Common myeloid progenitor, CD34-positive (primary cell): ENCODE measurements at regions of chr20 and their contacts with region 1.

Region 1: DNA sequence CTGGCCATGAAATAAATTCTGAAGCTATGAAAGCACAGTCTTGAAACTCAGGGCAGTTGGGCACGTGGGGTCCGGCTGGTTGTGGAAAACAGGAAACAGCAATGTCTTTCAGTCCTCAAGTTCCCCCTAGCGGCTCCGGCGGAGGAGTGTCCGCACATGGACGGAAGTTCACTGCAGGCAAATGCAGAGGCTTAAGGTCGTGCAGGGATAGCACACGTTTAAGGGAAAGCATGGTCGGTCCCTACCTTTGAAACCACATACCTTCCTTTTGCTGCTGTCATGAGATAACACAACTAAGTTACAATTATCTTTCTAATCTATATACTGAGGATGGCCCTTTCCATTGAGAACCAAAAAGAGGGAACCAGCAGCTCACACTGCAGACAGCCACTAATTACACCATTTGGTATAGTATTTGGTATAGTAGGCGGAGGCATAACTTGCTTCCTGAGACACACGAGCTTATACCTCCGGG is 52.6 kb upstream of the NFATC2 start:
- DNase-seq: peak; percentile 84 to 92 (median 91)
- H3K4me3 ChIP-seq: peak overlapping the region in 2 of 7 experiments; percentile 22 to 45
- H3K27ac ChIP-seq: peak overlapping the region in 1 of 2 experiments; percentile 43
- H3K4me1 ChIP-seq: peaks cover 9 to 16% (median 15%) of the 10 kb centered on the region in 4 experiments
- H3K27me3 ChIP-seq: no peaks in the 10 kb centered on the region

Region 2: DNA sequence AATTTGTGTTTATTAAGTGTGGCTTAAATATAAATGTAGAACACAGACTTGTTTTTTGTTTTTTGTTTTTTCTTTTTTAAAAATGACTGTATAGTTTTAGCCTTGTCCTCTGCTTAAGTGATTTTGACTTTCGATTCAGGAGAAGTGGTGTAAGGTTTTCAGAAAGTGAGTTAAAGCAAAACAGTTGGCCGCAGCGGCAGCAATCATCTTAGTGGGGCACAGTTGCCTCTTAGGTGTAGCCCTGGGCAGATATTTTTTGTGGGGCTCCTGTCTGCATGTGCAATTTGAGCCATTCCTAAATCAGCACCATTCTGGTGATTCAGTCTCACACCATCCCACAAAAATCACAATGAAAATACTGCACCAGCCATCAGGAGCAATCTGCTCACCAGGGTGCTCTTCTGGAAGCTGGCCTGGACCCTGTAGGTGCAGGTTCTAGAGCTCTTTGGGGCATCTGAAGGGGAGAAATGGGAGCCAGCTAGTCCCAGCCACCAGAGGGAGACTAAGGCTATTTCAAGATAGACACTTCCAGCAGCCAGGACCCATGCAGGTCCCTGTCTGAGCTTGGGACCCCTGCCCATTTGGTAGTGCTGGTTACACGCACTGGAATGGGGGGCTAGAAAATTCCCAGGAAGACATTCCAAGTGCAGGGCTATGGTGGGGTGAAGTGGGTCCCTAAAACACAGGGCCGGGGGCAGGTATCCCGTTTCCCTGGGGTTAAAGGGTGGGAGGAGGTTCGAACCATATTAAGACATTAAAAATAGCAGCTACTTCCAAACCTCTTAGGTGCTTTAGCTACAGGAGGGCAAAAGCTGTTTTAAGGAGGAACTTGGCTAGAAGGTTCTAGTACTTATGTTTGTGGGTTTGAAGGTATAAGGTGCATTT is 209.2 kb before region 1 on chr20:
- CTCF ChIA-PET with region 1: interaction called, 34 read pairs
- POLR2A ChIA-PET with region 1: no interaction called
- DNase-seq: peak; percentile 31 to 57 (median 49)
- H3K4me3 ChIP-seq: no peak overlapping the region
- H3K27ac ChIP-seq: no peak overlapping the region
- H3K4me1 ChIP-seq: no peaks in the 10 kb centered on the region
- H3K27me3 ChIP-seq: no peaks in the 10 kb centered on the region

Region 3: GRCh38 chr20:51456511-51457509 is 138.3 kb before region 1 on chr20:
- CTCF ChIA-PET with region 1: interaction called, 10 read pairs
- POLR2A ChIA-PET with region 1: no interaction called
- DNase-seq: peak; percentile 62 to 80 (median 79)
- H3K4me3 ChIP-seq: peak overlapping the region in 3 of 7 experiments; percentile 10 to 23 (median 14)
- H3K27ac ChIP-seq: no peak overlapping the region
- H3K4me1 ChIP-seq: peaks cover 0 to 12% (median 5%) of the 10 kb centered on the region in 4 experiments
- H3K27me3 ChIP-seq: no peaks in the 10 kb centered on the region

Region 4: GRCh38 chr20:51512645-51513044 is 82.5 kb before region 1 on chr20:
- CTCF ChIA-PET with region 1: no interaction called
- POLR2A ChIA-PET with region 1: no interaction called
- DNase-seq: no peak
- H3K4me3 ChIP-seq: no peak overlapping the region
- H3K27ac ChIP-seq: peak overlapping the region in 1 of 2 experiments; percentile 26
- H3K4me1 ChIP-seq: peaks cover 2 to 19% (median 10%) of the 10 kb centered on the region in 4 experiments
- H3K27me3 ChIP-seq: no peaks in the 10 kb centered on the region

Region 5: DNA sequence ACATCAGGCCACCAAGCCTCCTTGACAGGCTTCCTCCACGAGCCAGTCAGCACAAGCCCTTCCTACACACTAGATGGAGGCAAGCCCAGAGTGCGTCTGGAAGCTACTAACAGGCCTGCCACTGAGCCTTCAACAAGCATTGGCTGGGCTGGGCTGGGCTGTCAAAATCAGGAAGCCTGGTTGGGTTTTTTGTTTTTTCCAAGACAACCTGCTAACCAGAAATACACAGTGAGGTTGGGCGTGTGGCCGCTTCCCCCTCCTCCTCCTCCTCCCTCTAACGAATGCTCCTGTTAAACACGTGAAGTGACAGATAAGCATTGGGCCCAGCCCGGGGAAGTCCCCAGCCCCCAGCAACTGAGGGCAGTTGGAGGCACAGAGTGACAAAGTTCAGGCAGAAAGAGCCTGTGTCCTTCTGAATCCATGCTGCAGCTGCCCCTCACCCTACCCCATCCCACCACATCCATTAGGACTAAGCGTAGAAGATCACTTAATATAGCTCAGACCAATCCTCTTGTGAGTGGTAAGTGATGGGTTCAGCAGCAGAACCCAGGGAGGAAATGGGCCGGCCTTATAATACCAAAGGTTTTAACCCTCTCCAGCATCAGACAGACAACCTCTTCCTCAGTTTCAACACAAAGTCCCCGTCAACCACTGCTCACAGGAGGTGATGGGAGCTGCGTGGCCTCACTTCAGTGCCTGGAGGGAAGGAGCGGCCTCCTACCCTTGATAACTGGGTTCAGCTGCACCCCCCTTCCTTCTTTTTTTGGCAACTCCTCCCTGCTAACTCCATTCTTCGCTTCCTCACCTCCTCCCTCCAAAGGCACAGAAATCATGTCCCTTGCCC is 53.7 kb before region 1 on chr20:
- CTCF ChIA-PET with region 1: interaction called, 35 read pairs
- POLR2A ChIA-PET with region 1: interaction called, 9 read pairs
- DNase-seq: peak; percentile 98 to 100 (median 99)
- H3K4me3 ChIP-seq: peak overlapping the region; percentile 62 to 86 (median 74)
- H3K27ac ChIP-seq: peak overlapping the region; percentile 97 to 98
- H3K4me1 ChIP-seq: peaks cover 13 to 58% (median 53%) of the 10 kb centered on the region in 4 experiments
- H3K27me3 ChIP-seq: no peaks in the 10 kb centered on the region

Region 6: GRCh38 chr20:51678026-51678697 is 83.1 kb after region 1 on chr20:
- CTCF ChIA-PET with region 1: no interaction called
- POLR2A ChIA-PET with region 1: no interaction called
- DNase-seq: no peak
- H3K4me3 ChIP-seq: no peak overlapping the region
- H3K27ac ChIP-seq: no peak overlapping the region
- H3K4me1 ChIP-seq: no peaks in the 10 kb centered on the region
- H3K27me3 ChIP-seq: no peaks in the 10 kb centered on the region